ENCODE measurements at regions of chr11 and their contacts with region 1.

Region 1: GRCh38 chr11:4187055-4187988 is 92.7 kb downstream of the RRM1 start:
- DNase-seq: peak; percentile 96
- ATAC-seq: peak; percentile 89

Region 2: GRCh38 chr11:4493480-4493818 is 306.1 kb after region 1 on chr11:
- intact Hi-C with region 1: loop called (anchors 5 kb)
- DNase-seq: no peak
- ATAC-seq: no peak

Region 3: GRCh38 chr11:4539603-4540219 is 352.4 kb after region 1 on chr11:
- intact Hi-C with region 1: loop called (anchors 5 kb)
- DNase-seq: peak; percentile 63
- ATAC-seq: peak; percentile 75